Tibial artery (tissue), 4 donors: ENCODE measurements at regions of chr6 and their contacts with region 1.

Region 1: DNA sequence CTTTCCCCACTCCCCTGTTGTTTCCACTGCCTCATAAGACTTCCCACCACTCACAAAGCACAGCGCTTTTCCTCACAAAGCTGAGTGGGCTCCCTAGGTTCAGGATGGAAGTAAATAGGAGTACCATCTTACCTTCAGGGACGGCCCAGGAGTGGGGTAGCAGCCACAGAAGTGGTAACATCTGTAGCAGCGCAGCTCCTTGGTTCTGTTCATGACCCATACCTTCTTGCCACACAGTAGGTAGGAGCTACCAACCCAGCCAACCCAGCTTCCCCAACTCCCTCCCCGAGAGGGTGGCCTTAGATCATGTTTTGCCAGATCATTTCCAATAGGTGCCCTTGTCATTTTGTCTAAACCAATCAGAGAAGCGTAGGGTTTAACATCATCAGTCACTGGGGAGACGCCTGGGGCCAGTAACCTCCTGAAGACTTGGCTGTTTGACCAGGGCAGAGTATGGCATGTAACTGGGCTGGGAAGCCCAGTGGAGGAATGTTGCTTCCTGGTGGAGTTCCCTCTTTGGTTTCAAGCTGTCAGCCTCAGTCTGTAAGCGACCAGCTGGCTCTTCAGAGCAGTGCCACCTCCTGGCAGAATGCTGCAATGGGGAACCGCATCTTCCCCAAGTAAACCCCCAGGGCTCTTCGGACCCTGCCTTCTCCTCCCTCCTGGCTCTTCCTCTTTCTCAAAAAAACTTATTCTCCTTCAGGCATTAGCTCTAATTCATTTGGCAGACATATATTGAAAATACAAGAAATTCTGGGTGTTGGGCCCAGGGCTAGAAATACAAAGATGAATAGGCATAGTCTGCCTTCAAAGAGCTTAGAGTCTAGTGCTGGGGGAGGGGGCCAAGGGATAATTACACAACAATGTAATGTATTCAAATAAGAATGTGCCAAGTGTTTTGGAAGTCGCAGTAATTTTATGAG is at the start of gene HLA-DMA:
- DNase-seq: peak; percentile 91 to 96
- H3K4me3 ChIP-seq: peak within 1 kb of the TSS; percentile 24 to 30
- H3K27ac ChIP-seq: peak within 1 kb of the TSS; percentile 63 to 69
- H3K4me1 ChIP-seq: peaks cover 0 to 11% (median 5%) of the 10 kb centered on the region in 4 donors
- H3K27me3 ChIP-seq: no peaks in the 10 kb centered on the region
- CTCF ChIP-seq: peak; percentile 83 to 85

Region 2: DNA sequence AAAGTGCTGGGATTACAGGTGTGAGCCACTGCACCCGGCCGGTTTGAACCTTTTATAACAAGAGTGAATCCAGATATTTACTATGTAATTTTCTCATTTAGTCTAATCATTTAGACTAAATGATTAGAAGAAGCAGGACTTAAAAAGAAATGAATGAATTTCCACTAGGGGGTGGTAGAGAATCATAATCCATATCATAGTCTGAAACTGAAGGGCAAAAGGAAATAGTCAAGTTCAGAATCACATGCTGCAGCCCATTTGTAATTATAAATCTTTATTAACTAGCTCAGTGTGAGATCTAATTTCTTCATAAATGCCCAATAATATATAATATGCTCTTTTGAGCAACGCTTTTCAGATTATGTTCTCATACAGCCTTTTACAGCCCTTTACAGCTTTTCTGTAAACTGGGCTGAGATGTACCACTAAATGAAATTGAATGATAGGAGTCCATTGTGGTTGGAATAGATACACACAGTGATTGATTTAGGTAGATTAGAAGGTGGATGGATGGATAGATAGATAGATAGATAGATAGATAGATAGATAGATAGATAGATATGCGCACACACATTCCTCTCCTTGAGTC is 67.3 kb before region 1 on chr6:
- intact Hi-C with region 1: loop called (anchors 10 kb)
- DNase-seq: no peak
- H3K4me3 ChIP-seq: no peak overlapping the region
- H3K27ac ChIP-seq: no peak overlapping the region
- H3K4me1 ChIP-seq: peaks cover 0 to 11% (median 0%) of the 10 kb centered on the region in 4 donors
- H3K27me3 ChIP-seq: no peaks in the 10 kb centered on the region
- CTCF ChIP-seq: peak; percentile 60 to 70